Activated T-helper 1 cell treated with anti-CD3 and anti-CD28 coated beads, Interleukin-12 subunit alpha, Interleukin-12 subunit beta, Interleukin-2, Interleukin-4 antibody, amounts not matched to agents 30 ng/mL and 10 ng/mL and 1 ng/mL, durations not matched to agents 14 hours and 24 hours and 36 hours (primary cell): ENCODE measurements at regions of chr4 and their contacts with region 1.

Region 1: DNA sequence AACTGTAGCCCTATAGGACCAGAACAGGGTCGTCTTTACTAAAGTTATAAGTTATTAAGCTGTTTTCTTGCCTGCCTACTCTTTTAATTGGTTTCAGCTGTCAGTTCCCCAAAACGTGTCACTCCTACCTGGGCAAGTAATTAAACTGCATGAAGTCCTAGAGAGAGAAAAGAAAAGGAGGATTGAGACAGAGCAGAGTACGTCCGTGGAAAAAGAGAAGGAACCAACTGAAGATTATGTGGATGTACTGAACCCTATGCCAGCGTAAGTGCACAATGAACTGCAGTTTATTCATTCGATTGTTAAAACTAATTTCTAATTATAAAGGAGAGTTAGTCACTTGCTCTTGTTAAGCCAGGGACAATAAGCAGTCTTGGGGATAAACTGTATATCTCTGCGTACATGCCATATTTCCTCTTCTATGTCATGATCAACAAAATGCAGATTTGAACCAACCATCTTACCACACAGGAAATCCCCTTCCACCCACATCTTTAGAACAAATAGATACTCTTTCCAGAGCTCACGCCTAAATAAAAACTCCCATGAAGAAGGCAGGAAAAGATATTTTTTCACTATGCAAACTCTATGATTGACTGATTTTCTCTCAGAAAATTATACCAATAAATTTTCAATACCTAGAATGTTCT is 22.8 kb downstream of the STAP1 start:
- DNase-seq: peak; percentile 27
- H3K4me3 Mint-ChIP-seq: peak overlapping the region; percentile 63
- H3K27ac Mint-ChIP-seq: peak overlapping the region; percentile 91
- H3K4me1 Mint-ChIP-seq: peaks cover 26% of the 10 kb centered on the region
- H3K27me3 Mint-ChIP-seq: no peaks in the 10 kb centered on the region

Region 2: GRCh38 chr4:67522851-67523671 is 58.3 kb before region 1 on chr4:
- intact Hi-C with region 1: loop called (anchors 1 kb)
- DNase-seq: no peak
- H3K4me3 Mint-ChIP-seq: peak overlapping the region; percentile 19
- H3K27ac Mint-ChIP-seq: peak overlapping the region; percentile 92
- H3K4me1 Mint-ChIP-seq: peaks cover 65% of the 10 kb centered on the region
- H3K27me3 Mint-ChIP-seq: no peaks in the 10 kb centered on the region

Region 3: DNA sequence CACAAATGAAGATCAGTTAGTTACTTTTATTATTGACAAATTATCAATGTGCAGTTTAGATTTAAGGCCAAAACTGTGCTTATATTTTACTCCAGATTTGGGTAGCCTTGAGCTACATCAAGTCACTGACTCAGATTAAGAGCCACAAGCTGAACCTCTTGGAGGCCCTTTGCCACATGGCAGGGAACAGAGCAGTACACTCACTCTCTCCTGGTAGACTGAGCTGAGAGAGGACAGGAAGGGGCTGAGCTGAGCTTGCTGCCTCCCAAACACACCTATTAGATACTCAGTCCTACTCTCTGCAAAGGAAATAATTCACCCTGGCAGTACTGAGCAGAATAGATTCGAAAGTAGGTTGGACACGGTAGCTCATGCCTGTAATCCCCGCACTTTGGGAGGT is 15.0 kb before region 1 on chr4:
- intact Hi-C with region 1: loop called (anchors 2 kb)
- DNase-seq: no peak
- H3K4me3 Mint-ChIP-seq: no peak overlapping the region
- H3K27ac Mint-ChIP-seq: peak overlapping the region; percentile 59
- H3K4me1 Mint-ChIP-seq: peaks cover 32% of the 10 kb centered on the region
- H3K27me3 Mint-ChIP-seq: no peaks in the 10 kb centered on the region

Region 4: DNA sequence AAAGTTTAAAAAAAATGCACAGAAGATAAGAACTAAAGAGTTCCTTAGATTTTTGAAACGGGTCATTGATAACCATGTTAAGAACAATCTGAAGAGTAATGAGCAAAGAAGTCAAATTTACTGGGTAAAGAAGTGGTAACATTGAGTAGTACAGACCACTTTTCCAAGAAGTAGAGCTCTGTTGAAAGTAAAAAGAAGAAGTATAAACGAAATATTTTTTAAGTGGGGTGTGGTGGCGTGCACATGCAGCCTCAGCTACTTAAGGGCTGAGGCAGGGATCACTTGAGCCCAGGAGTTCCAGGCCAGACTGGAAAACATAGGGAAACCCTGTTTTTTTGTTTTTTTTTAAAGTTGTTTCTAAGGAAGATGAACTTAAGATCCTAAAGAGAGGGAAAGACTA is 51.2 kb after region 1 on chr4:
- intact Hi-C with region 1: loop called (anchors 10 kb)
- DNase-seq: no peak
- H3K4me3 Mint-ChIP-seq: peak overlapping the region; percentile 85
- H3K27ac Mint-ChIP-seq: peak overlapping the region; percentile 79
- H3K4me1 Mint-ChIP-seq: peaks cover 34% of the 10 kb centered on the region
- H3K27me3 Mint-ChIP-seq: no peaks in the 10 kb centered on the region

Region 5: DNA sequence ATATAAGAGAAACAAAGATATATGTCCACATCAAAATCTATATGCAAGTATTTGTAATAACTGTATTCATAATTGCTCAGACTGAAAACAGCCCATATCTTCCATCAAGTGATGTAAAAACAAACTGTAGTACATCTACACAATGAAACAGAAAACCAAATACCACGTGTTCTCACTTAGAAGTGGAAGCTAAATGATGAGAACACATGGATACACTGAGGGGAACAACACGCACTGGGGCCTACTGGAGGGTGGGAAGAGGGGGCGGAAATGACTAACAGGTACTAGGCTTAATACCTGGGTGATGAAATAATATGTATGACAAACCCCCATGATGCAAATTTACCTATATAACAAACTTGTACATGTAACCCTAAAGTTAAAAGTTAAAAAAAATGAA is 77.0 kb after region 1 on chr4:
- intact Hi-C with region 1: loop called (anchors 2 kb)
- DNase-seq: no peak
- H3K4me3 Mint-ChIP-seq: no peak overlapping the region
- H3K27ac Mint-ChIP-seq: no peak overlapping the region
- H3K4me1 Mint-ChIP-seq: peaks cover 12% of the 10 kb centered on the region
- H3K27me3 Mint-ChIP-seq: no peaks in the 10 kb centered on the region

Region 6: DNA sequence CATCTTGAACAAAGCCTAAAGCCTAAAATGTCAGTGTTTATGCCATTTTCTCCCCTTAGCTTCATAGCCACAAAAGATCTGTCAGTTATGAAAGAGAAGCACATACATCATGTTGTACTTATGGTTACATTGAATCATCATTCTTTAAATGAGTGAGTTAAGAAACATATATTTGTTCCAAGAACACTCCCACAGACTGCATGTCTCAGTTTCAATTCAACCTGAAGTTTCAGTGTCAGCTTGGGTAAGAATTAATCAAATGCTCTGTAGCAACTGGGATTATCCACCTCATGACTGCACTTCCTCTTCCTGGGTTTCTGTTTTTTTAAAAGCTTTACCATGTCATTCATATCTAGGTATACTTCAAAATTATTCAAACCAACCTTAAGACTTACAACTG is 668.1 kb after region 1 on chr4:
- intact Hi-C with region 1: loop called (anchors 5 kb)
- DNase-seq: no peak
- H3K4me3 Mint-ChIP-seq: peak overlapping the region; percentile 23
- H3K27ac Mint-ChIP-seq: peak overlapping the region; percentile 87
- H3K4me1 Mint-ChIP-seq: peaks cover 13% of the 10 kb centered on the region
- H3K27me3 Mint-ChIP-seq: no peaks in the 10 kb centered on the region